Activated CD8-positive, alpha-beta T cell treated with anti-CD3 and anti-CD28 coated beads for 36 hours (primary cell): ENCODE measurements at regions of chr6 and their contacts with region 1.

Region 1: GRCh38 chr6:134288538-134289203 is 29.2 kb downstream of the SGK1 start:
- DNase-seq: peak; percentile 31
- ATAC-seq: peak; percentile 81
- H3K4me3 Mint-ChIP-seq: peak overlapping the region; percentile 47
- H3K27ac Mint-ChIP-seq: peak overlapping the region; percentile 90
- H3K4me1 Mint-ChIP-seq: peaks cover 26% of the 10 kb centered on the region
- H3K27me3 Mint-ChIP-seq: no peaks in the 10 kb centered on the region
- CTCF ChIP-seq: no peak

Region 2: GRCh38 chr6:133277900-133278545 is 1010.6 kb before region 1 on chr6:
- CTCF ChIA-PET with region 1: no interaction called
- POLR2A ChIA-PET with region 1: no interaction called
- intact Hi-C with region 1: no loop called
- DNase-seq: no peak
- ATAC-seq: no peak
- H3K4me3 Mint-ChIP-seq: no peak overlapping the region
- H3K27ac Mint-ChIP-seq: no peak overlapping the region
- H3K4me1 Mint-ChIP-seq: no peaks in the 10 kb centered on the region
- H3K27me3 Mint-ChIP-seq: no peaks in the 10 kb centered on the region
- CTCF ChIP-seq: no peak

Region 3: GRCh38 chr6:134235937-134236751 is 52.5 kb before region 1 on chr6:
- CTCF ChIA-PET with region 1: interaction called, 4 read pairs
- POLR2A ChIA-PET with region 1: interaction called, 3 read pairs
- intact Hi-C with region 1: loop called (anchors 2 kb)
- DNase-seq: peak; percentile 23
- ATAC-seq: peak; percentile 79
- H3K4me3 Mint-ChIP-seq: no peak overlapping the region
- H3K27ac Mint-ChIP-seq: peak overlapping the region; percentile 92
- H3K4me1 Mint-ChIP-seq: peaks cover 56% of the 10 kb centered on the region
- H3K27me3 Mint-ChIP-seq: no peaks in the 10 kb centered on the region
- CTCF ChIP-seq: no peak

Region 4: DNA sequence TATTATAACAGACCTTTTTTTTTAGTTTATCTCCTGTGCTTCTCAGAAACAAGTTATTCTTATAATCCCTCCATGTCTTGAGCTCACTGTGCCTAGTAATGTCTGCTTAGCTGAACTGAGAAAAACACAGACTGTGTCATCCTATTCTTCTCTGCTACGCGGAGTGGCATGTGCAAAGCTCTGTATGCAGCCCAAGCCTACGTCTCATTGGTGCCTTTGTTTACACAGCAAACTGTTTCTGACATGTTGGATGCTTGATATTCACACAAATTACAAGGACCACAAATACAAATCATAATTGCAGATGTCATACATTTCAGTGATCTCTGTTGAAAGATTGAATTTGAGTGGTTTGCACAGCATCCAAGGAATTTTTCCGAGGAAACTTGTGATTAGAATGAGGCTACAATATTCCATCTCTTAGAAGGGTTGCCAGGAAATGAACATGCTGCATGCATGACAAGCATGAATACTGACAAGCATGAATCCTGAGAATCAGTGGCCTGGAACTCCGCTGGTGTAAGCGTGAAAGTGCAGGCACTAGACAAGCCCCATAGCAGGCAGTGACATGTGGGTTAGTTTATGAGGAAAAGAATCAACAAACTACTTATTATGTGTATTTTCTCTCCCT is 157.7 kb after region 1 on chr6:
- CTCF ChIA-PET with region 1: no interaction called
- POLR2A ChIA-PET with region 1: no interaction called
- intact Hi-C with region 1: no loop called
- DNase-seq: no peak
- ATAC-seq: no peak
- H3K4me3 Mint-ChIP-seq: no peak overlapping the region
- H3K27ac Mint-ChIP-seq: no peak overlapping the region
- H3K4me1 Mint-ChIP-seq: peaks cover 11% of the 10 kb centered on the region
- H3K27me3 Mint-ChIP-seq: no peaks in the 10 kb centered on the region
- CTCF ChIP-seq: no peak

Region 5: GRCh38 chr6:134589512-134589911 is 300.8 kb after region 1 on chr6:
- CTCF ChIA-PET with region 1: no interaction called
- POLR2A ChIA-PET with region 1: no interaction called
- intact Hi-C with region 1: no loop called
- DNase-seq: no peak
- ATAC-seq: no peak
- H3K4me3 Mint-ChIP-seq: no peak overlapping the region
- H3K27ac Mint-ChIP-seq: no peak overlapping the region
- H3K4me1 Mint-ChIP-seq: no peaks in the 10 kb centered on the region
- H3K27me3 Mint-ChIP-seq: no peaks in the 10 kb centered on the region
- CTCF ChIP-seq: no peak